ENCODE measurements at regions of chr19 and their contacts with region 1.

Region 1: GRCh38 chr19:2427429-2428320 is at the start of gene TIMM13:
- DNase-seq: peak; percentile 96 to 99 (median 98)
- H3K4me3 ChIP-seq: peak within 1 kb of the TSS; percentile 61 to 79
- H3K4me3 Mint-ChIP-seq: peak within 1 kb of the TSS; percentile 90 to 97 (median 94)
- H3K27ac ChIP-seq: peak within 1 kb of the TSS; percentile 95
- H3K27ac Mint-ChIP-seq: peak within 1 kb of the TSS; percentile 93 to 99 (median 99)
- H3K4me1 ChIP-seq: peaks cover 21% of the 10 kb centered on the region
- H3K4me1 Mint-ChIP-seq: peaks cover 6 to 19% (median 12%) of the 10 kb centered on the region in 4 donors
- H3K27me3 ChIP-seq: no peaks in the 10 kb centered on the region
- H3K27me3 Mint-ChIP-seq: no peaks in the 10 kb centered on the region
- total RNA-seq, gene TIMM13: 30.6 to 31.6 TPM

Region 2: GRCh38 chr19:2455851-2456570 is 28.3 kb after region 1 on chr19:
- CTCF ChIA-PET with region 1: no interaction called
- POLR2A ChIA-PET with region 1: interaction called, 30 read pairs
- intact Hi-C with region 1: loop called (anchors 1 kb)
- DNase-seq: peak in 4 of 5 donors; percentile 18 to 79 (median 34)
- H3K4me3 ChIP-seq: peak overlapping the region; percentile 34 to 70
- H3K4me3 Mint-ChIP-seq: peak overlapping the region; percentile 79 to 92 (median 86)
- H3K27ac ChIP-seq: peak overlapping the region; percentile 87
- H3K27ac Mint-ChIP-seq: peak overlapping the region; percentile 76 to 95 (median 87)
- H3K4me1 ChIP-seq: peaks cover 24% of the 10 kb centered on the region
- H3K4me1 Mint-ChIP-seq: peaks cover 6 to 23% (median 13%) of the 10 kb centered on the region in 4 donors
- H3K27me3 ChIP-seq: no peaks in the 10 kb centered on the region
- H3K27me3 Mint-ChIP-seq: no peaks in the 10 kb centered on the region

Region 3: DNA sequence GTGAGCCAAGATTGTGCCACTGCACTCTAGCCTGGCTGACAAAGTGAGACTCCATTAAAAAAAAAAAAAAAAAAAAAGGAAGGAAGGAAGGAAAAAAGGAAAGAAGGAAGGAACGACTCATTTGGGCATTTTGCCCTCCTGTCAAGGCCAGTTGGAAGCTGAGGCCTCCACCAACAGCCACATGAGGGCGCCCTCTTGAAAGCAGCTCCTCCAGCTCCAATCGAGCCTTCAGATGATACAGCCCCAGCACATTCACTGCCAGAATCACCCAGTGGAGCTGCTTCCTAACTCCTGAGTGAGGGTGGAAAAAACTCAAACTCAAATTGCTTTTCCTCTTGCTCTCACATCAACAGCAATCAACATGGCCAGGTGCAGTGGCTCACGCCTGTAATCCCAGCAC is 233.9 kb after region 1 on chr19:
- CTCF ChIA-PET with region 1: no interaction called
- POLR2A ChIA-PET with region 1: no interaction called
- intact Hi-C with region 1: no loop called
- DNase-seq: no peak
- H3K4me3 ChIP-seq: no peak overlapping the region
- H3K4me3 Mint-ChIP-seq: no peak overlapping the region
- H3K27ac ChIP-seq: no peak overlapping the region
- H3K27ac Mint-ChIP-seq: no peak overlapping the region
- H3K4me1 ChIP-seq: no peaks in the 10 kb centered on the region
- H3K4me1 Mint-ChIP-seq: no peaks in the 10 kb centered on the region
- H3K27me3 ChIP-seq: no peaks in the 10 kb centered on the region
- H3K27me3 Mint-ChIP-seq: no peaks in the 10 kb centered on the region